Esophagus muscularis mucosa (tissue), 4 donors: ENCODE measurements at regions of chr15 and their contacts with region 1.

Region 1: GRCh38 chr15:41283653-41284426 is 48.6 kb downstream of the OIP5 start:
- DNase-seq: peak; percentile 99
- H3K4me3 ChIP-seq: peak overlapping the region; percentile 83 to 99 (median 89)
- H3K27ac ChIP-seq: peak overlapping the region; percentile 90 to 96 (median 92)
- H3K4me1 ChIP-seq: peaks cover 28 to 44% (median 42%) of the 10 kb centered on the region in 4 donors
- H3K27me3 ChIP-seq: no peaks in the 10 kb centered on the region
- CTCF ChIP-seq: no peak
- EP300 ChIP-seq: no peak
- POLR2A ChIP-seq: peak; percentile 82

Region 2: DNA sequence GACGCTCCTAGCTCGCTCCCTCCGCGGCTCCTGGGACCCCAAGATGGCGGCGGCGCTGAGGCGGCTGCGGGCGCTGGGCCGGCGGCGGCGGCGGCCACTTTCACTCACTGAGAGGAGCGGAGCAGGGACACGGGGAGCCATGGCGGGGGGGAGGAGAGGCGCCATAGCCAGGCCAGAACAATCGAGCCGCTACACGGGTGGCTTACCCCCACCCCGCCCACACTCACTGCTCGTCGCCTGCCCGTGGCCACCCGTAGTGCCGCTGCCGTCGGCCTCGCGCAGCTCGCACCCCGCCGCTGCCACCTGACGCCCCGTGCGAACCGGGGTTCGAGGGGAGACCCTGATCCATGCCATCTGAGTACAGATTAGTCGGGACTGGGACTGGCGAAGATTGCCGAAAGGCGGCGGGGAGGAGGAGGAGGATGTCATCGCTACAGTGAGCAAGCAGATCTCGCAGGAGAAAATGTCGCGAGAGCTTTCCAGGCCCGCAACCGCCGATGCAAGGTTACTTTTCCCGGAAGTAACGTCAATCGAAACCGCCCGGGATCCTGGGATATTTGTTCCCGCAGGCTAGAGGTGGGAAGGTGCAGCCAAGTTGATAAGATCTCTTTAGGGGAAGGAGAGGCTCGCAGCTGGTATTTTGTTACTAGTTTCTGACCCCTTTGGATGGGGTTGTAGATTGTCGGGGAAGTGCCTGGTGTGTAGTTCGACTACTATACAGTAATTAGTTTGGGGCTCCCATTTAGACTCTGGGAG is 167.5 kb before region 1 on chr15 and contains the start of gene INO80:
- intact Hi-C with region 1: loop called (anchors 5 kb)
- DNase-seq: peak; percentile 99
- H3K4me3 ChIP-seq: peak within 1 kb of the TSS; percentile 90 to 99 (median 93)
- H3K27ac ChIP-seq: peak within 1 kb of the TSS; percentile 99 to 100 (median 99)
- H3K4me1 ChIP-seq: peaks cover 12 to 43% (median 30%) of the 10 kb centered on the region in 4 donors
- H3K27me3 ChIP-seq: peaks cover 0 to 11% (median 0%) of the 10 kb centered on the region in 4 donors
- CTCF ChIP-seq: peak in 1 of 3 experiments; percentile 3
- EP300 ChIP-seq: peak; percentile 8
- POLR2A ChIP-seq: no peak
- total RNA-seq, gene INO80: 22.4 to 28.7 (median 24.0) TPM

Region 3: GRCh38 chr15:41169781-41170180 is 114.1 kb before region 1 on chr15:
- intact Hi-C with region 1: no loop called
- DNase-seq: no peak
- H3K4me3 ChIP-seq: no peak overlapping the region
- H3K27ac ChIP-seq: no peak overlapping the region
- H3K4me1 ChIP-seq: no peaks in the 10 kb centered on the region
- H3K27me3 ChIP-seq: no peaks in the 10 kb centered on the region
- CTCF ChIP-seq: no peak
- EP300 ChIP-seq: no peak
- POLR2A ChIP-seq: no peak

Region 4: DNA sequence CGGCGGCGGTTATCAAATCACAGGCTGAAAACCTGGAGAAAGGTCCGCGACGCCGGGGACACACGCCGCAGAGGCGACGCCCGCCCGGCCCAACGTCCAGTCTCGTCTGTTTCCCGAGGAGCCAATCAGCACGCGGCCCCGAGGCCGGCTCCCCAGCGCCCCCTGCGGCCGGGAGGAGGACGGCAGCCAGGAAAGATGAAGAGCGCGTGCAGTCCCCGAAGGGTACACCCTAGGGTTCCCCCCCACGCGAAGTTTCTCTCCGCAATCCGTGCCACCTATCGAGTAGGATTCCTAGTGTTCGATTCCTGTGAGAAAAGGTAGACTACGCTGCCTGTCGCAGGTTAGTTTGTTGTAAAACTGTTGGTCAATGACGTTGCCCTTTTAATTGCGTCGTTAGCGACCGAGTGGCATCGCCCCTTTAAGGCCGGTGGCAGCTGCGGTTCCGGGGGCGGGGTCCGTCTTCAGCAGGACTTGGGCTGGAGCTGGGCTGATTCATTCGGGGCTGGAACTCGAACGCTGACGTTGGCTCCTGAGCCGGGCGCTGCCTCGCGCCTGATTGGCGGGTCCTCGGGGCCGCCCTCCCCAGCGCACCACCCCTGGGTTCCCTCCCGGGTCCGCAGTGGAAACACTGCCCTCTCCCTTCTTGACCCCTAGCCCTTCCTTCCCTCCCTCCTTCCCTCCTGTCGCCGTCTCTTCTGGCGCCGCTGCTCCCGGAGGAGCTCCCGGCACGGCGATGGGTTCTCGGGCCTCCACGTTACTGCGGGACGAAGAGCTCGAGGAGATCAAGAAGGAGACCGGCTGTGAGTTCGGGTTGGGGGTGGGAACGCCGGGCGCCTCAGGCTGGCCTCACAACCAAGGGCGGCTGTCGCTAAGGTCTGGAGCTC is 52.9 kb before region 1 on chr15 and contains the starts of genes CHP1 and EXD1:
- intact Hi-C with region 1: loop called (anchors 5 kb)
- DNase-seq: peak; percentile 100
- H3K4me3 ChIP-seq: peak within 1 kb of the TSS; percentile 61 to 93 (median 84)
- H3K27ac ChIP-seq: peak within 1 kb of the TSS; percentile 92 to 97 (median 92)
- H3K4me1 ChIP-seq: peaks cover 17 to 36% (median 27%) of the 10 kb centered on the region in 4 donors
- H3K27me3 ChIP-seq: no peaks in the 10 kb centered on the region
- CTCF ChIP-seq: peak; percentile 94 to 99 (median 96)
- EP300 ChIP-seq: no peak
- POLR2A ChIP-seq: peak; percentile 57
- total RNA-seq, gene CHP1: 67.3 to 108 (median 94.5) TPM
- total RNA-seq, gene EXD1: not detected

Region 5: DNA sequence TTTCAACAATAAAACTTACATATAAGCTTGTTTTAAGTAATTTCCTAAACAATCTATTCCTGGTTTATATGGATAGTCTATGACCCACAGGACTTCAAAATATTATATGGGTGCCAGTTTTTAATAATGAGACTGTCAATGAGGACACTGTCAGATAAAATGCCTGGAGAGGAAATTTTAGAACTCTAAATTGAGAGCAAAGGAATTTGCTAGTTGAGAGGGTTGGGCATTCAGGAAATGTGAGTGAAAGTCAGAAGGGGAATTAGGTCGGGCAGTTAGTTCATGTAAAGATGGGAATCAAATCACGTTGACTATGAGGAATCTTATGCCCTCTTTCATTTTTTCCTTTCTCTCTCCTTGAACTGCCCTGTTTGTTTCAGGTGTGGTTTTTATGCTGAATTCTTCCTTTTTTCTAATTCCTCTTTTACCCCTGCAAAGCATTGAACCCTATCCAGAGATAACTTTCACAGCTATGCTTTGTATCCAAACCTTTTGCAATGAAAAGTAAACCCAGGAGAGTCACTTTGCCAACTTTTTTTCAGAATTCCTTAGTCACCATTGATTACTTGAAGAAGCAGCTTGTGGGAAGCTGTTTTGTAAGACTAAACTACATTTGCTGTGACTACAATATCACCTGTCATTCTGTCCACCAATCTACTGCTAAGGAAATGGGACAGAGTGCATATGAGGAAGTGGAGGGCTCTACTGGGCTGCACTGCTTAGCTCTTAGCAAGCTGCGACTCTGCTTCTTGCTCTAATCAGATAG is 25.0 kb before region 1 on chr15:
- intact Hi-C with region 1: no loop called
- DNase-seq: no peak
- H3K4me3 ChIP-seq: no peak overlapping the region
- H3K27ac ChIP-seq: no peak overlapping the region
- H3K4me1 ChIP-seq: peaks cover 0 to 10% (median 3%) of the 10 kb centered on the region in 4 donors
- H3K27me3 ChIP-seq: no peaks in the 10 kb centered on the region
- CTCF ChIP-seq: no peak
- EP300 ChIP-seq: no peak
- POLR2A ChIP-seq: no peak

Region 6: GRCh38 chr15:41331833-41332787 is 48.3 kb after region 1 on chr15 and contains the start of gene OIP5:
- intact Hi-C with region 1: loop called (anchors 5 kb)
- DNase-seq: peak; percentile 100
- H3K4me3 ChIP-seq: peak within 1 kb of the TSS; percentile 76 to 86 (median 80)
- H3K27ac ChIP-seq: peak within 1 kb of the TSS; percentile 60 to 77 (median 74)
- H3K4me1 ChIP-seq: peaks cover 11 to 17% (median 16%) of the 10 kb centered on the region in 4 donors
- H3K27me3 ChIP-seq: no peaks in the 10 kb centered on the region
- CTCF ChIP-seq: peak; percentile 66 to 86 (median 69)
- EP300 ChIP-seq: no peak
- POLR2A ChIP-seq: no peak
- total RNA-seq, gene OIP5: 0.39 TPM in 1 of 4 donors, not detected in the others

Region 7: DNA sequence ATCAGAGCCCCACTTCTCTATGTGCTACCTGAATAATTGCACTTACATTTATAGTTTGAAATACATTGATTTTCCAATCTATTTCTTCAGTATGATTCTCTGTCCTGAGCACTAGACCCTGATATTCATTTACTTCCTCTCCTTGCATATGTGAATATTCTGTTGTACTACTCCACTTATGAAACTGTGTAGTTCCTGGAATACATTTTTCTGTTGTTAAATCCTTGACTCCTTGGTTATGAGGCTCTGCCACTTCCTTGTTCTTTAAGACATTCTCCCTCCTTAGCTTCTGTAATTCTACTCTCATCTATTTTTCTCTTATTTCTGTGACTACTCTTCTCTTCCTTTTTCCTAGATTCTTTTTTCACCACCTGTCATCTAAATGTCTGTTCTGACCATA is 363.4 kb after region 1 on chr15:
- intact Hi-C with region 1: no loop called
- DNase-seq: no peak
- H3K4me3 ChIP-seq: no peak overlapping the region
- H3K27ac ChIP-seq: no peak overlapping the region
- H3K4me1 ChIP-seq: no peaks in the 10 kb centered on the region
- H3K27me3 ChIP-seq: no peaks in the 10 kb centered on the region
- CTCF ChIP-seq: no peak
- EP300 ChIP-seq: no peak
- POLR2A ChIP-seq: no peak